PC-3 (cell line): ENCODE measurements at regions of chr14 and their contacts with region 1.

Region 1: GRCh38 chr14:25431211-25432048 is 381.5 kb upstream of the STXBP6 start:
- DNase-seq: peak; percentile 23
- ATAC-seq: no peak
- H3K4me3 ChIP-seq: no peak overlapping the region
- H3K27ac ChIP-seq: no peak overlapping the region
- H3K4me1 ChIP-seq: no peaks in the 10 kb centered on the region
- H3K27me3 ChIP-seq: no peaks in the 10 kb centered on the region
- CTCF ChIP-seq: peak; percentile 37

Region 2: GRCh38 chr14:25444381-25444780 is 13.0 kb after region 1 on chr14:
- CTCF ChIA-PET with region 1: no interaction called
- POLR2A ChIA-PET with region 1: no interaction called
- intact Hi-C with region 1: no loop called
- DNase-seq: no peak
- ATAC-seq: no peak
- H3K4me3 ChIP-seq: no peak overlapping the region
- H3K27ac ChIP-seq: no peak overlapping the region
- H3K4me1 ChIP-seq: no peaks in the 10 kb centered on the region
- H3K27me3 ChIP-seq: no peaks in the 10 kb centered on the region
- CTCF ChIP-seq: no peak

Region 3: DNA sequence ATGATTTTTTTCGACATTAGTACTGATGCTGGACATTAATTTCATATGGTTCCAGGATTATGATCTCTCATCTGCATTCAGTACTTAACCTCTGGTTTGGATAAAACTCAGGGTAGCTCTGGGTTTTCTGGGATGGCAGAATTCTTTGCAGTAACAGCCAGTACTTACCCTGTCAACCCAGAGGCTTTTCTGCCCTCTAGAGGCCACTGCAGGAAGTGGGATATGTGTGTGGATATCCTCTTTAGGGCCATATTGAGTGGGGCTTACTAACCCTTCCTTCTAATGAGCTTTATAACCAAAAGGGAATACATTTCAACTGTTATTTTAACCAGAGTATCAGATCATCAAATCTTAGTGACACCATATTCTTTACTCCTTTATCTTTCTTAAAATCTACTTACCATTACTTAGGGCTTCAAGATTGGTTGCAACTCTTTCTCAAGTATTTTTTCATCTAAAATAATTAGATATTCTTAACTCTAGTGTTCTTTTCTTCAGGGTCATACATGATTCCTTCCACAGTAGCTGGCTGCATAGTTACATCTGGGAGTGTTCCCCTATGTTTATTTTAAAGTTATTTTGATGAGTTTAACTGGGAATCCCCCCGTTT is 106.5 kb after region 1 on chr14:
- CTCF ChIA-PET with region 1: no interaction called
- POLR2A ChIA-PET with region 1: no interaction called
- intact Hi-C with region 1: loop called (anchors 5 kb)
- DNase-seq: peak; percentile 29
- ATAC-seq: no peak
- H3K4me3 ChIP-seq: no peak overlapping the region
- H3K27ac ChIP-seq: no peak overlapping the region
- H3K4me1 ChIP-seq: no peaks in the 10 kb centered on the region
- H3K27me3 ChIP-seq: no peaks in the 10 kb centered on the region
- CTCF ChIP-seq: peak; percentile 54